ENCODE measurements at regions of chr17 and their contacts with region 1.

Region 1: GRCh38 chr17:28357061-28357900 is at the start of gene POLDIP2:
- DNase-seq: peak; percentile 79
- H3K4me3 ChIP-seq: peak within 1 kb of the TSS; percentile 96
- H3K27ac ChIP-seq: peak within 1 kb of the TSS; percentile 39
- H3K27me3 ChIP-seq: no peaks in the 10 kb centered on the region
- CTCF ChIP-seq: no peak
- polyA plus RNA-seq, gene POLDIP2: 84.7 and 97.7 TPM in 2 replicates

Region 2: DNA sequence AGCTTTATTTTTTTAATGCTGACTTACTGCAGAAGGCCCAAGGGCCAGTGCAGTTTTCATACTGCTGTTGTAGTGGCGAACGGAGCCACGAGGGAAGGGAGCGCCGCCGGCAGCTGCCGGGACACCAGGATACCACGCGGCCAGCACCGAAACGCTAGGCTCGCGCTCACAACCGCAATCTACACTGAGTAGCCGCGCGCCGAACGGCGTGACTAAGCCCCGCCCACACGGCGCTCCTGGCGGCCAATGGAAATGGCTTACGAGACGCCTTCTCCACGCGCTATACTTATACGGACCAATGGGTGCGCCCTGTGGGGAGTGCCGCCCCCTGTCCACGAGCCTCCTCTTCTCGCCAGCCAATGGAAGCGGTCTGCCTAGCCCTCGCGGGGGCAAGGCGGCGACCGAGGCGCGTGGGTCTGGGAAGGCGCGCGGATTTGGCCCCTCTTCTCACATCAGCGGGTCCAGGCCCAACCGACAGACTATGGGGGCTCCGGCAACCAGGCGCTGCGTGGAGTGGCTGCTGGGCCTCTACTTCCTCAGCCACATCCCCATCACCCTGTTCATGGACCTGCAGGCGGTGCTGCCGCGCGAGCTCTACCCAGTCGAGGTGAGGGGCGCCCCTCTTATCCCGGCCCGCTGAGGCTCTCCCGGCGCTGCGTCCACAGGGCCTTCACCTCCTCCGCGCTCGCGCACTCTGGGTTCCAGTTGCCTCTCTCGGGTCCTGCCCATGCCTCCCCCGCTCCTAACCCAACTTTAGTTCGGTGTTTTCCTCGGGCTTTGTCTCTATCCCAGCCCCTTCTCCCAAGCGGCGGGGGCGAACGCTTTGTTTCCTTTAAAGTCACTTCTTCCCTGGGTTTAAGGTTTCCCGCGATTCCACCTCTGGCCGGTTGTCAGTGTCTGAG is 38.3 kb before region 1 on chr17 and contains the start of gene TMEM97:
- CTCF ChIA-PET with region 1: no interaction called
- POLR2A ChIA-PET with region 1: no interaction called
- DNase-seq: peak; percentile 94
- H3K4me3 ChIP-seq: peak within 1 kb of the TSS; percentile 83
- H3K27ac ChIP-seq: peak within 1 kb of the TSS; percentile 52
- H3K27me3 ChIP-seq: no peaks in the 10 kb centered on the region
- CTCF ChIP-seq: 0 out of 2 replicates have a peak, but pooled peaks have one; percentile 13
- polyA plus RNA-seq, gene TMEM97: 12.1 and 16.1 TPM in 2 replicates

Region 3: GRCh38 chr17:28335201-28335955 is 21.9 kb before region 1 on chr17 and contains the starts of genes IFT20 and TNFAIP1:
- CTCF ChIA-PET with region 1: no interaction called
- POLR2A ChIA-PET with region 1: interaction called, 36 read pairs
- DNase-seq: peak; percentile 100
- H3K4me3 ChIP-seq: peak within 1 kb of the TSS; percentile 97
- H3K27ac ChIP-seq: peak within 1 kb of the TSS; percentile 99
- H3K27me3 ChIP-seq: no peaks in the 10 kb centered on the region
- CTCF ChIP-seq: no peak
- polyA plus RNA-seq, gene IFT20: 43.5 and 67.1 TPM in 2 replicates
- polyA plus RNA-seq, gene TNFAIP1: 51.2 and 64.7 TPM in 2 replicates

Region 4: GRCh38 chr17:28346746-28347246 is 10.5 kb before region 1 on chr17:
- CTCF ChIA-PET with region 1: no interaction called
- POLR2A ChIA-PET with region 1: interaction called, 24 read pairs
- DNase-seq: no peak
- H3K4me3 ChIP-seq: no peak overlapping the region
- H3K27ac ChIP-seq: peak overlapping the region; percentile 89
- H3K27me3 ChIP-seq: no peaks in the 10 kb centered on the region
- CTCF ChIP-seq: peak; percentile 46

Region 5: DNA sequence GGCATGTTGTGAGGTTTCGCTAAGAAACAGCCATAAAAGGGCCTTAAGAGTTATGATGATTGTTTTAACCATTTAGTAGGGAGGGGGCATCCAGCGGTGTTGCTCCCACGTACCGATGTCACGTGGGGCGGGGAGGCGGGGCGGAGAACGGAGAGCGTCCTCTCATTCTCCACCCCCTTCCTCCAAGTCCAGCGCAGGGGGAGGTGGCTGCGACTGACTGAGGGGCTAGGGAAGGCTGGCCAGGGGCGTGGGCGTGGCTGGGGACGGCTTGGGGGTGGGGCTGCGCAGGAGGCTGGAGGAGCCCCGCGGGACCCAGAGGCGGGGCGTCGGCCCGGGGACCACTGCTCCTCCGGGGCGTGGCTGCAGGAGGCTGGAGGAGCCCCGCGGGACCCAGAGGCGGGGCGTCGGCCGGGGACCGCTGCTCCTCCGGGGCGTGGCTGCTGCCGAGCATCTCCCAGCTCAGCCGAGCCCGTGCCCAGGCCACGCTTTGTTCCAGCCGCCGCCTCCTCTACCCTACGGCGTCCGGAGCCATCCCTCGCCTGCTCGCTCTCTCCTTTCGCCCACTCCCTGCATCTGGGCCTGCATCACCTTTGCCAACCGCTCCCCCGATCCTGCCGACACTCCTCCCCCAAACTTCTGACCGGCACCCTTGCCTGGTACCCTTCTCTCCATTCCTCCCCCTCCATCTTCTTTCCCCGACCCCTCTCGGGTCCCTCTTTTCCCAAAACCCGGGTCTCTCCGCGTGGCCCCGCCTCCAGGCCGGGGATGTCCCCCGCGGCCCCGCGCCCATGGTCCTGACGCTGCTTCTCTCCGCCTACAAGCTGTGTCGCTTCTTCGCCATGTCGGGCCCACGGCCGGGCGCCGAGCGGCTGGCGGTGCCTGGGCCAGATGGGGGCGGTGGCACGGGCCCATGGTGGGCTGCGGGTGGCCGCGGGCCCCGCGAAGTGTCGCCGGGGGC is 14.2 kb after region 1 on chr17 and contains the start of gene SARM1:
- CTCF ChIA-PET with region 1: interaction called, 4 read pairs
- POLR2A ChIA-PET with region 1: interaction called, 17 read pairs
- DNase-seq: peak; percentile 76
- H3K4me3 ChIP-seq: peak within 1 kb of the TSS; percentile 69
- H3K27ac ChIP-seq: peak within 1 kb of the TSS; percentile 0
- H3K27me3 ChIP-seq: no peaks in the 10 kb centered on the region
- CTCF ChIP-seq: no peak
- polyA plus RNA-seq, gene SARM1: 6.2 and 6.7 TPM in 2 replicates